ENCODE measurements at regions of chr12 and their contacts with region 1.

Region 1: GRCh38 chr12:575948-576612 is 87.2 kb downstream of the NINJ2 start:
- DNase-seq: peak; percentile 83 to 89
- H3K4me3 ChIP-seq: peak overlapping the region; percentile 16 to 28
- H3K27ac ChIP-seq: peak overlapping the region; percentile 73 to 77
- H3K4me1 ChIP-seq: peaks cover 0 to 36% (median 29%) of the 10 kb centered on the region in 4 donors
- H3K27me3 ChIP-seq: no peaks in the 10 kb centered on the region
- CTCF ChIP-seq: peak; percentile 99

Region 2: GRCh38 chr12:810671-811415 is 234.8 kb after region 1 on chr12:
- intact Hi-C with region 1: loop called (anchors 5 kb)
- DNase-seq: no peak
- H3K4me3 ChIP-seq: no peak overlapping the region
- H3K27ac ChIP-seq: no peak overlapping the region
- H3K4me1 ChIP-seq: peaks cover 0 to 43% (median 17%) of the 10 kb centered on the region in 4 donors
- H3K27me3 ChIP-seq: no peaks in the 10 kb centered on the region
- CTCF ChIP-seq: no peak

Measured in tibial artery (tissue), 4 donors.